Activated B cell treated with CpG ODN at 0.5 μM for 24 hours (primary cell): ENCODE measurements at regions of chr2 and their contacts with region 1.

Region 1: GRCh38 chr2:231612179-231613053 is 19.8 kb downstream of the TEX44 start:
- DNase-seq: peak; percentile 92
- ATAC-seq: peak; percentile 50
- H3K4me3 Mint-ChIP-seq: peak overlapping the region; percentile 85
- H3K27ac Mint-ChIP-seq: peak overlapping the region; percentile 96
- H3K4me1 Mint-ChIP-seq: peaks cover 47% of the 10 kb centered on the region
- H3K27me3 Mint-ChIP-seq: no peaks in the 10 kb centered on the region
- CTCF ChIP-seq: peak; percentile 82

Region 2: DNA sequence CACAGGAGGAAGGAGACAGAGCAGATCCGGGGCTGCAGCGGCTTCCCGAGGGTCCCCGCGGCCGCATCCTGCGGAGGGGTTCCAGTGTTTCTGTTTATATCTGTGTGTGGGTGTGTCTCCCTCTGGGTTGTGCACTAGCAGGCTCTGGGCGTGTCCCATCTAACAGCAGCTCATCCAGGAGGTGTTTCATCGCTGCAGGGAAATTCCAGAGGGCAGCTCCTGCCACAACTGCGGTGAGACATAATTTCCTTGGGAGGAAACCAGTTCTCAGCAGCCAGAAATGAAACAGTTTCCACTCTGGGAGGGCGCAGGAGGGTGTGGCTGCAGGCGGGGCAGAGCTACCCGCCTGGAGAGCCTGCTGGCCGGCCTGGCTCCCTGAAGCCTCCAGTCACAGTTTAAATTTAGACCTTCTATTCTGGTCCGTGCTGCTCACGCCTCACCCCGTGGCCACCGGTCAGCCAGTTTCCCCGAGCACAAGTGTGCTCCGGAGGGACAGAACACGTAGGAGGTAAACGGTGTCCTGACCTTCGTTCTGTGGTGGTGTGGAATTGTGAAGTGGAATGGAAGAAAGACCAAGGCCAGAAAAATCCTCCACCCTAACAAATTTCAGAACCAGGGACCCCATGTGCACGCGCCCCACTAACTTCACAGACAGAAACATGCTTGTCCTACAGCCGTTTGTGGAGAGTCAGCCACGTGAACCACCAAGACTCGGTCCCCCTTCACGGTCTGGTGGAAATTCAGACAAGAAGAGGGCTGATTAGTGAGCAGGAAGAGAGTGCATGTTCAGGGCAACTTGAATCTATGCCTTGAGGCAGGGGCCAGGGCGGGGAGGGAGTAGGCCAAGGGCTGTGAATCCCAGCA is 30.4 kb after region 1 on chr2:
- CTCF ChIA-PET with region 1: interaction called, 12 read pairs
- POLR2A ChIA-PET with region 1: interaction called, 46 read pairs
- intact Hi-C with region 1: loop called (anchors 1 kb)
- DNase-seq: peak; percentile 39
- ATAC-seq: peak; percentile 80
- H3K4me3 Mint-ChIP-seq: peak overlapping the region; percentile 80
- H3K27ac Mint-ChIP-seq: peak overlapping the region; percentile 66
- H3K4me1 Mint-ChIP-seq: peaks cover 16% of the 10 kb centered on the region
- H3K27me3 Mint-ChIP-seq: no peaks in the 10 kb centered on the region
- CTCF ChIP-seq: no peak

Region 3: DNA sequence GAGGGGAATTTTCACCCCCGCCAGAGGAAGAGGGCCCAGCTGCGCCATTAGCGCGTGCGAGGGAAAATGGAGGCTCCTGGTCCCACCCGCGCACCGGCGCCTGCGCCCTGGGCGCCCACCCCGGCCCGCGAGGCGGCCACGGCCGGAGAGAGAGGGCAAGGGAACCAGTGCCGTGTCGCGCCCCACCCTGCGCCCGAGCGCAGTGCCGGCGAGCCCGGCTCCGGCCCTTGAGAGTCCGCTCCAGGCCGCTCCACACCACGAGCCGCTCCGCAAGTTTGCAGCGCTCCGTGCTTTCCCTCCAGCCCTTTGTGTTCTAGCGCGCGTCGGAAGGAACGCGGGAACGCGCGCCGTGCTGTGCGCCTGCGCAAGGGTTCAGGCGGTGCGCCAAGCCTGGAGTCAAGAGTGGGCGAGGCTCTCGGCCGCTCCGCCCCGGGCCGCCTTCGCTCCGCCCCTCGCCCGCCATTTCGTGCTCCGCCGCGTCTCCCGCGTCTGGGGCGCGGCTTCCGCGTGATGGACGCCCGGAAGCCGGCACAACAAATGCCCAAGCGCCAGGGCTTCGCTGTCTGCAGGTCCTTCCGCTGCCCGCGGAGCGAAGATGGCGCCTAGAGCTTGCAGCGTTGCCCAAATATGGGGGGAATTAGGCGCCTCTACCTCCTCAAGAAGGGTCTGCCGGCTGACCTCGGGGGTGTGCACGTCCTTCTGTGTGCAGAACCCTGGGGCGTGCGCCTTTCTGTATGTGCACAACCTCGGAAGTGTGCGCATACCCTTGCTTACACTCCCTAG is 49.8 kb after region 1 on chr2:
- CTCF ChIA-PET with region 1: interaction called, 19 read pairs
- POLR2A ChIA-PET with region 1: interaction called, 1,242 read pairs
- intact Hi-C with region 1: loop called (anchors 1 kb)
- DNase-seq: peak; percentile 97
- ATAC-seq: peak; percentile 78
- H3K4me3 Mint-ChIP-seq: peak overlapping the region; percentile 74
- H3K27ac Mint-ChIP-seq: peak overlapping the region; percentile 92
- H3K4me1 Mint-ChIP-seq: peaks cover 67% of the 10 kb centered on the region
- H3K27me3 Mint-ChIP-seq: no peaks in the 10 kb centered on the region
- CTCF ChIP-seq: no peak

Region 4: DNA sequence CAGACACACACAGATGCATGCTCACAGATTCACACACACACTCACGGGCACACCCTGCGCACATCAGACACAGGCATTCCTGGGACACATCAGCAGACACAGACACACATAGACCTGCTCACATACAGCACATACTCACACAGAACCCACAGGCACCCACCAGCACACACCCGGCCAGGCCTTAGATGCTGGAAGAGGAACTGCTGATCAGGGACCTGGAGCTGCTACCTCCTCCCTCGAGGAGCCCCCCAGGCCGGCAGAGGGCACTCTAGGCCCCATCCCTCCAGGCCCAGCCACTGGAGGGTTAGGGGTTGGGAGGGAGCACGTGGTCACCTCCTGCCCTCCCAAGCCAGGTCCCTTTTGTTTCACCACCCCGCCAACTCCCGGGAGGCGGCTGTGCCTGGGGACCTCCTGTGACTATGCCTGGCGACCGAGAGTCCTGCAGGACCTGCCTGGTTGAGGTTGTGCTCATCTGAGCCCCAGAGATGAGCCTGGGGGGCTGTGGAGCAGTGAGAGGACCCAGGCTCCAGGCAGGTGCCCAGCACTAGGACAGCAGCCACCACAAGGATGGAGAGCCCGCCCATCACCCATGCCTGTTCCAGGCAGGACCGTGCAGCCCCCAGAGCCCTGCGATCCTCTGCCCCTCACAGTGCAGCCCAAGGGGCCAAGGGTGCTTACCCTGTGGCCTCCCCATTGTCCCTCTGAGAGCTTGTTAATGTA is 74.9 kb after region 1 on chr2:
- CTCF ChIA-PET with region 1: interaction called, 7 read pairs
- POLR2A ChIA-PET with region 1: interaction called, 84 read pairs
- intact Hi-C with region 1: loop called (anchors 1 kb)
- DNase-seq: peak; percentile 68
- ATAC-seq: peak; percentile 91
- H3K4me3 Mint-ChIP-seq: no peak overlapping the region
- H3K27ac Mint-ChIP-seq: peak overlapping the region; percentile 32
- H3K4me1 Mint-ChIP-seq: peaks cover 39% of the 10 kb centered on the region
- H3K27me3 Mint-ChIP-seq: no peaks in the 10 kb centered on the region
- CTCF ChIP-seq: peak; percentile 39

Region 5: DNA sequence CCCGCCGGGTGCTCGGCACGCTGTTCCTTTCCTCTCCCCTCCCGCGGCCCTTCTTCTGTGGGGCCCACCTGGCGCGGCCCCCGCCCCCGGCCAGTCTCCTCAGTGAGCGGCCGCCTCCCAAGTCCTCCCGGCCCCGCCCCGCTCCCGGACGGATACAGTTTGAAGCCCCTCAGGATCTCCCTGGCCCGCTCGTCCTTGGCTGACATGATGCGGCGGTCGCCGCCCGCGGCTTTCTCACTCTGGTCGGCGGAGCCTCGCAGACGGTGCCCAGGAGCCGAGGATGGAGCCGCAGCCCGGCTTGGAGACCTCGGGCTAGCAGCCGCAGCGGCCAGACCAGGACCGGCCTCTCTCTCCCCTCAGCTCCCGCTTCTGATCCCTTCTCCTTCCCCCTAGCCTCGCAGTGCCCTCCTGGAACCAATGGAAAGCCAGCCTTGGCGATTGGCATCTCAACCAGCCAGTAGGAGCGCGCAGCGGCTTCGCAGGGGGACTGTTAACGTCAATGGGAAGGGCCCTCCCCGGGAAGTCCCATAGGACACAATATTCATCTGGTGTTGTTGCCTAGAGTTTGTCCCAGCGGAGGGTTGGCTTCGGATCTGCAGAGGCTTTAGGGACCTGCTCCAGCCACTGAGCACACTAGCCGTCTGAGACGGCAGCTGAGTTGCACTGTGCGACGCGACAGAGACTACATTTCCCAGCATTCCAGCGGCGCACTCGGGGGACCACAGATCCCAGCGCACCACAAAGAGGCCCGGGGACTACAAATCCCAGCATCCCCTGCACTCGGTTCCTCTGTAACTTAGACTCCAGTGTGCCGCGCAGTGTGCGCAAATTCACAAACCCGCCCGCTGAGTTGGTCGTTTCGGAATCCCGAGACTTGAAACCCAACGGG is 168.7 kb after region 1 on chr2 and contains the start of gene PDE6D:
- CTCF ChIA-PET with region 1: interaction called, 6 read pairs
- POLR2A ChIA-PET with region 1: interaction called, 8 read pairs
- intact Hi-C with region 1: loop called (anchors 1 kb)
- DNase-seq: peak; percentile 95
- ATAC-seq: peak; percentile 89
- H3K4me3 Mint-ChIP-seq: peak within 1 kb of the TSS; percentile 99
- H3K27ac Mint-ChIP-seq: peak within 1 kb of the TSS; percentile 96
- H3K4me1 Mint-ChIP-seq: peaks cover 52% of the 10 kb centered on the region
- H3K27me3 Mint-ChIP-seq: no peaks in the 10 kb centered on the region
- CTCF ChIP-seq: no peak
- total RNA-seq, gene PDE6D: 35.7 and 41.3 TPM in 2 replicates